GM23248 (cell line): ENCODE measurements at regions of chr2 and their contacts with region 1.

Region 1: GRCh38 chr2:158893026-158893425 is 75.4 kb upstream of the TANC1 start:
- DNase-seq: peak; percentile 76
- H3K4me3 ChIP-seq: no peak overlapping the region
- H3K27ac ChIP-seq: no peak overlapping the region
- H3K4me1 ChIP-seq: peaks cover 19% of the 10 kb centered on the region; the same call in 1 of the 2 replicates
- H3K27me3 ChIP-seq: no peaks in the 10 kb centered on the region

Region 2: DNA sequence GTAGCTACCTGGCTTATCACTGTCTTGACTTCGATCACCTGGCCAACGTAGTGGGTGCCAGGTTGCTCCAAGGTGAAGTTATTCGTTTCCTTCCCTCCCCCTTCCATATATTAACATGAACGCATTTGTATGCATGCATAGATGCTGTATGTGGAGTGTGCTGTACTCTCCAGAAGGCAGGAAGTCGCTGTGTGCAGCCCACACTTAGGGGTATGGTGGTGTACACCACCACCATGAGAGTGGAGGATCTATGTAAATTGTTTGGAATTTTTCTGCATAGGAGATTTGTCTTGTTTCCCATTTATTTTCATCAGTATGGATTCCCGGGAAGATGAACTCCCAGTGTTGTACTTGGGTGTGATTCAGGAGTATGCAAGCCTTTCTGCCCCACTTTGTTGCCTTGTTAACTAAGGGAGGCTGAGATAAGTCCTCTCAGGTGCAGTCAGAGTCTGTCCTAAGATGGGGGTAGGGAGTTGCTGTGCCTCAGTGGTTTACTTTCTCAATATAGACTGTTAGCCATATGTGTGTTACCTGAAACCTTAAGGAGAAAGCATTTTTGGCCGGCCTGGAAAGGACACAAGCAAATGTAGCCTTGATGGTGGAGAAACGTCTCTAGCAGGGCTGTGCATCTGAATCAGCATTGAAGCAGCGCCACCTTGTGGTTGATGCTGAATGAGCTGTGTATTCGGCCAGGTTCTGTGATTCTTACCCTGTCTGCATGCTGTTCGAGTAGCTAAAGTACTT is 225.3 kb after region 1 on chr2:
- in situ Hi-C with region 1: loop called (anchors 5 kb)
- DNase-seq: peak; percentile 84
- H3K4me3 ChIP-seq: no peak overlapping the region
- H3K27ac ChIP-seq: no peak overlapping the region
- H3K4me1 ChIP-seq: peaks cover 5% of the 10 kb centered on the region
- H3K27me3 ChIP-seq: no peaks in the 10 kb centered on the region

Region 3: GRCh38 chr2:159484532-159484931 is 591.5 kb after region 1 on chr2:
- in situ Hi-C with region 1: no loop called
- DNase-seq: no peak
- H3K4me3 ChIP-seq: no peak overlapping the region
- H3K27ac ChIP-seq: no peak overlapping the region
- H3K4me1 ChIP-seq: no peaks in the 10 kb centered on the region
- H3K27me3 ChIP-seq: no peaks in the 10 kb centered on the region